ENCODE measurements at regions of chr2 and their contacts with region 1.

Region 1: GRCh38 chr2:160493227-160494028 is at the start of gene RBMS1:
- DNase-seq: peak; percentile 70
- ATAC-seq: peak; percentile 31
- H3K4me3 Mint-ChIP-seq: peak within 1 kb of the TSS; percentile 91
- H3K27ac Mint-ChIP-seq: peak within 1 kb of the TSS; percentile 65
- H3K4me1 Mint-ChIP-seq: peaks cover 48% of the 10 kb centered on the region
- H3K27me3 Mint-ChIP-seq: peaks cover 2% of the 10 kb centered on the region
- total RNA-seq, gene RBMS1: 39.3 to 47.7 TPM

Region 2: GRCh38 chr2:160125828-160126227 is 367.6 kb before region 1 on chr2:
- CTCF ChIA-PET with region 1: no interaction called
- POLR2A ChIA-PET with region 1: no interaction called
- intact Hi-C with region 1: no loop called
- DNase-seq: no peak
- ATAC-seq: no peak
- H3K4me3 Mint-ChIP-seq: no peak overlapping the region
- H3K27ac Mint-ChIP-seq: no peak overlapping the region
- H3K4me1 Mint-ChIP-seq: no peaks in the 10 kb centered on the region
- H3K27me3 Mint-ChIP-seq: peaks cover 7% of the 10 kb centered on the region

Region 3: GRCh38 chr2:160417745-160418397 is 75.6 kb before region 1 on chr2:
- CTCF ChIA-PET with region 1: no interaction called
- POLR2A ChIA-PET with region 1: no interaction called
- intact Hi-C with region 1: loop called in 1 of 2 experiments (anchors 2 kb)
- DNase-seq: peak; percentile 50
- ATAC-seq: peak; percentile 92
- H3K4me3 Mint-ChIP-seq: peak overlapping the region; percentile 6
- H3K27ac Mint-ChIP-seq: peak overlapping the region; percentile 88
- H3K4me1 Mint-ChIP-seq: peaks cover 80% of the 10 kb centered on the region
- H3K27me3 Mint-ChIP-seq: no peaks in the 10 kb centered on the region

Region 4: GRCh38 chr2:160472839-160473251 is 20.6 kb before region 1 on chr2:
- CTCF ChIA-PET with region 1: interaction called, 7 read pairs
- POLR2A ChIA-PET with region 1: interaction called, 3 read pairs
- intact Hi-C with region 1: loop called in 1 of 2 experiments (anchors 2 kb)
- DNase-seq: no peak
- ATAC-seq: peak; percentile 68
- H3K4me3 Mint-ChIP-seq: no peak overlapping the region
- H3K27ac Mint-ChIP-seq: peak overlapping the region; percentile 85
- H3K4me1 Mint-ChIP-seq: peaks cover 75% of the 10 kb centered on the region
- H3K27me3 Mint-ChIP-seq: no peaks in the 10 kb centered on the region

Region 5: GRCh38 chr2:160533476-160533875 is 40.0 kb after region 1 on chr2:
- CTCF ChIA-PET with region 1: no interaction called
- POLR2A ChIA-PET with region 1: no interaction called
- intact Hi-C with region 1: no loop called
- DNase-seq: no peak
- ATAC-seq: no peak
- H3K4me3 Mint-ChIP-seq: no peak overlapping the region
- H3K27ac Mint-ChIP-seq: no peak overlapping the region
- H3K4me1 Mint-ChIP-seq: peaks cover 3% of the 10 kb centered on the region
- H3K27me3 Mint-ChIP-seq: no peaks in the 10 kb centered on the region

Region 6: GRCh38 chr2:160652236-160652635 is 158.8 kb after region 1 on chr2:
- CTCF ChIA-PET with region 1: no interaction called
- POLR2A ChIA-PET with region 1: no interaction called
- intact Hi-C with region 1: loop called in 1 of 2 experiments (anchors 5 kb)
- DNase-seq: peak; percentile 84
- ATAC-seq: peak; percentile 98
- H3K4me3 Mint-ChIP-seq: peak overlapping the region; percentile 10
- H3K27ac Mint-ChIP-seq: peak overlapping the region; percentile 59
- H3K4me1 Mint-ChIP-seq: peaks cover 29% of the 10 kb centered on the region
- H3K27me3 Mint-ChIP-seq: no peaks in the 10 kb centered on the region

Measured in activated CD4-positive, alpha-beta T cell treated with anti-CD3 and anti-CD28 coated beads for 36 hours (primary cell).